Cardiac septum (tissue), 1 donor: ENCODE measurements at regions of chr18 and their contacts with region 1.

Region 1: GRCh38 chr18:43271593-43272432 is 5.5 kb downstream of the SYT4 start:
- DNase-seq: no peak

Region 2: DNA sequence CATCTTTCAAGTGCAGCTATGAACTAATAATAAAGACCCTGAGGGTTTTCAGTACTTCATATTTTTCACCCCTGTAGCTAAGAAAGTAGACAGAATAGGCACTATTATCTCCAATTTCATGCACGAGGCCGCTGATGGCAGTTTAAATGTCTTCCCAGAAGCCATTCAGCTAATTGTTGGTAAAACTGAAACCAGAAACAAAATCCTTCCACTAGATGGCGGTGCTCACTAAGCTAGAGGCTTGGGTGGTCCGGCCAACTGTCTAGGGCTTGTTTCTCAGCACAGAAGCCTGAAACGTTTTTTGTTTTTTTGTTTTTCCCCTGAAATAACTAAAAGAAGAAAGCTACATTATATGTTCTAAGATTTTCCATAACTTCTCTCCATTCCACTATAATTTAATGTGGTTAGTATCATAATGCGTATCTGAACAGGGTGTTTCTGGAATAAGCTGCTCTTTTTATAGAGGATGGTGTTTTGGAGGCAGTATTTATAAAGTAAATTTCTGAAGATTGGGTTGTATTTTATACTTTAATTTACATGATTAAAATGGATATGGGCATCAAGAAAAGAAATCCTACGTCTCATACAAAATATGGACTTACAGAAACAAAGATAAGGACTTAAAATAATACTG is 1157.4 kb before region 1 on chr18:
- intact Hi-C with region 1: loop called (anchors 5 kb)
- DNase-seq: no peak

Region 3: GRCh38 chr18:42298759-42299675 is 972.8 kb before region 1 on chr18:
- intact Hi-C with region 1: loop called (anchors 10 kb)
- DNase-seq: peak; percentile 77

Region 4: GRCh38 chr18:43034683-43035505 is 236.9 kb before region 1 on chr18:
- intact Hi-C with region 1: no loop called
- DNase-seq: no peak